ENCODE measurements at regions of chr10 and their contacts with region 1.

Region 1: DNA sequence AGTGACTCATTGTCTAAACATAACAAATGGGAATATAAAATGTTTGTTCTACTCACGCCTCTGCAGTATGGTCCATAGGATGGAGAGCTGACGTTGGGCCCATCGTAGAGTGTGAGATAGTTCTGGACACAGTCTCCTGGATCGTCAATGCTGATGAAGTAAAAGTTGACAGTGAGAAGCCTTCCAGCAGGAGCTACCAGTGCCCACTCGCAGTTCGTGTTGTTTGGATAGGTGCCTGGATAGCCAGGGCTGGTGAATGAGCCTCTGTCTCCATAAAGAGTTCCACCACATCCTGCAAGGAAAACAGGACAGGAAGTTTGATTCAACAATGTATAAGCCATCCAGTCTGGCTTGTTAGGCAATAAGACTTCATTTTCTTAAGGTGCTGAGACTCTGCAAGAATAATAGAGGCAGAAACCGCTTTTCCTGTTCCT is 79.6 kb downstream of the OR13A1 start:
- DNase-seq: no peak
- ATAC-seq: peak; percentile 18
- H3K4me3 ChIP-seq: no peak overlapping the region
- H3K27ac ChIP-seq: no peak overlapping the region
- H3K4me1 ChIP-seq: peaks cover 0 to 5% of the 10 kb centered on the region in 2 experiments; a peak in 2 of 4 replicates
- H3K27me3 ChIP-seq: no peaks in the 10 kb centered on the region
- CTCF ChIP-seq: no peak
- POLR2A ChIP-seq: no peak
- RAD21 ChIP-seq: no peak

Region 2: DNA sequence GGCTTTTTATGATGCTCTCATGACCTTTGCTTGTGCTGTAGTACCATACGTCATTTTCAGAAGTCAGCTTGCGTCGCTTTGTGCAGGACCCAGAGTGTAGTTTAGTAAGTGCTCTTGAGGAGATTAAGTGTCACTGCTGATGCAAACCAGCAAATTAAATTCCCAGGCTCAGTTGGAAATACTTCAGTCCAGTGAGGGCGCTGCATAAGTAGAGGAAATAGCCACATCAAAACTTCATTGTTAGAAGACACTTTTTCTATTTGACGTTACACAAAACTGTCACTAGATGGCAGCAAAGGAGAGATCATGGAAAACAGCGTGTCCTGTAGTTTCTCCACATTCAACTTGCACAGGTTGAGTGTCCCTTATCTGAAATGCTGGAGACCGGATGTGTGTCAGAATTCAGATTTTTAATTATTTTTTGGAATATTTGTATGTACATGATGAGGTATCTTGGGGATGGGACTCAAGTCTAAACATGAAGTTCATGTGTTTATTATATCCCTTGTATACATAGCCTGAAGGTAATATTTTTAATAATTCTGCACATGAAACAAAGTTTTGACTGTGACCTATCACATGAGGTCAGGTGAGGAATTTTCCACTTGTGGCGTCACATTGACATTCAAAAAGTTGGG is 227.2 kb before region 1 on chr10:
- CTCF ChIA-PET with region 1: interaction called, 4 read pairs
- POLR2A ChIA-PET with region 1: no interaction called
- RAD21 ChIA-PET with region 1: no interaction called
- intact Hi-C with region 1: loop called (anchors 10 kb)
- DNase-seq: peak; percentile 87
- ATAC-seq: peak; percentile 98
- H3K4me3 ChIP-seq: no peak overlapping the region
- H3K27ac ChIP-seq: no peak overlapping the region
- H3K4me1 ChIP-seq: peaks cover 0 to 5% of the 10 kb centered on the region in 2 experiments; a peak in 2 of 4 replicates
- H3K27me3 ChIP-seq: no peaks in the 10 kb centered on the region
- CTCF ChIP-seq: peak; percentile 63 to 97 (median 85)
- POLR2A ChIP-seq: no peak
- RAD21 ChIP-seq: peak; percentile 95

Region 3: DNA sequence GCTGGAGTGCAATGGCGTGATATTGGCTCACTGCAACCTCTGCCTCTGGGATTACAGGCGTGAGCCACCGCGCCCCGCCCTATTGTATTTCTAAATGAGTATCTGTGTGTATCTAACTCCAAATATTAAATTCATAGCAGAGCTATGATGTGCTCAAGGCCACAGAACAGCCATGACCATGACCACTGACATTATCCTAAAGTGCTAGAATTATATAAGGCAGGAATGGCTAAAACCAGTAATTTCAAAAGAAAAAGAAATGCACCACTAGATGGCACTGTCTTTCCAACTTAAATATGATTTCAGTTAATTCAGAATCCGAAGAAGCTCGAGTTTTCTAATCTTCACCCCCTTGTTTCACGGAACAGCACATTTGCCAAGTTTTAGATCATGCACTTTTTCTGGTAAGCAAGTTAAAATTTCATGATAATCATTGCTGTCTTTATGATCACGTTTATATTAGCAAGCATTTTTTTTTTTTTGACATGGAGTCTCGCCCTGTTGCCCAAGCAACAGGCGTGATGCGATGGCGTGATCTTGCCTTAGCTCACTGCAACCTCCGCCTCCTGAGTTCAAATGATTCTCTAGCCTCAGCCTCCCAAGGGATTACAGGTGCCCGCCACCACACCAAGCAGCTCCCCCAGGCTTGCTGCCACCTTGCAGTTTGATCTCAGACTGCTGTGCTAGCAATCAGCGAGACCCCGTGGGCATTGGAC is 14.3 kb after region 1 on chr10:
- CTCF ChIA-PET with region 1: interaction called, 22 read pairs
- POLR2A ChIA-PET with region 1: interaction called, 3 read pairs
- RAD21 ChIA-PET with region 1: interaction called, 3 to 6 read pairs
- intact Hi-C with region 1: loop called (anchors 2 kb)
- DNase-seq: peak; percentile 53
- ATAC-seq: peak; percentile 85
- H3K4me3 ChIP-seq: peak overlapping the region; percentile 40 to 46
- H3K27ac ChIP-seq: peak overlapping the region; percentile 9; the same call in 1 of the 2 replicates
- H3K4me1 ChIP-seq: peaks cover 0 to 10% of the 10 kb centered on the region in 2 experiments; a peak in 1 of 4 replicates
- H3K27me3 ChIP-seq: no peaks in the 10 kb centered on the region
- CTCF ChIP-seq: peak; percentile 33 to 70 (median 51); a peak in 4 of 6 replicates
- POLR2A ChIP-seq: no peak
- RAD21 ChIP-seq: peak; percentile 74

Region 4: GRCh38 chr10:45491091-45491490 is 255.3 kb after region 1 on chr10:
- CTCF ChIA-PET with region 1: no interaction called
- POLR2A ChIA-PET with region 1: no interaction called
- RAD21 ChIA-PET with region 1: no interaction called
- intact Hi-C with region 1: no loop called
- DNase-seq: no peak
- ATAC-seq: no peak
- H3K4me3 ChIP-seq: no peak overlapping the region
- H3K27ac ChIP-seq: no peak overlapping the region
- H3K4me1 ChIP-seq: no peaks in the 10 kb centered on the region
- H3K27me3 ChIP-seq: no peaks in the 10 kb centered on the region
- CTCF ChIP-seq: no peak
- POLR2A ChIP-seq: no peak
- RAD21 ChIP-seq: no peak

Region 5: GRCh38 chr10:45672181-45673073 is 436.6 kb after region 1 on chr10 and contains the start of gene ZFAND4:
- CTCF ChIA-PET with region 1: interaction called, 3 read pairs
- POLR2A ChIA-PET with region 1: no interaction called
- RAD21 ChIA-PET with region 1: no interaction called
- intact Hi-C with region 1: loop called (anchors 10 kb)
- DNase-seq: peak; percentile 91
- ATAC-seq: peak; percentile 97
- H3K4me3 ChIP-seq: peak within 1 kb of the TSS; percentile 87 to 94
- H3K27ac ChIP-seq: peak within 1 kb of the TSS; percentile 90
- H3K4me1 ChIP-seq: peaks cover 5 to 16% of the 10 kb centered on the region in 2 experiments; a peak in 3 of 4 replicates
- H3K27me3 ChIP-seq: no peaks in the 10 kb centered on the region
- CTCF ChIP-seq: peak in 2 of 3 experiments; percentile 33 to 41; a peak in 4 of 6 replicates
- POLR2A ChIP-seq: peak; percentile 62
- RAD21 ChIP-seq: peak; percentile 46
- total RNA-seq, gene ZFAND4: 15.5 TPM

Region 6: DNA sequence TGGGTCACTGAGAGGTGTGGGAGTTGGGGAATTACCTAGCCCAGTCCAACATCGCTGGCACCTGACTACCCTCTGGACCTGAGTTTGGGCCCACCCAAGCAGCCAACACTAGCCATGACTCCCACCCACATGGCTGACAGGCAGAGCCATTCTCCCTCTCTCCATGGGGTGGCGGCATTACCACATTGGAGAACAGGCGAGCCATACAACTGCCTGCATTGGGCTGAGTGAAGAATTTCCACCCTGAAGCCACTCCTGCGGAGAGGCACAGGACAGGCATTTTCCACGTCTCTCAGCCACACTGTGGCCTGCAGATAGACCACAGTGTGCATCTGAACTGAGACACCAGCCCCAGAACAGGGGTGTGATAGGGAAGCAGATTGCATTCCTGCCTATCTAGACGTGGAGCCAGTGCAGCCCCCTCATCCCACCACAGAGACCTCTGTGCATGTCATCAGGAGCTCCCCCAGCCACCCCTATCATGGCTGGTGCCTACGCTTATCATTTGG is 992.8 kb after region 1 on chr10:
- CTCF ChIA-PET with region 1: no interaction called
- POLR2A ChIA-PET with region 1: no interaction called
- RAD21 ChIA-PET with region 1: no interaction called
- intact Hi-C with region 1: loop called (anchors 10 kb)
- DNase-seq: peak; percentile 44
- ATAC-seq: peak; percentile 95
- H3K4me3 ChIP-seq: no peak overlapping the region
- H3K27ac ChIP-seq: no peak overlapping the region
- H3K4me1 ChIP-seq: peaks cover 3 to 11% of the 10 kb centered on the region in 2 experiments; a peak in 2 of 4 replicates
- H3K27me3 ChIP-seq: no peaks in the 10 kb centered on the region
- CTCF ChIP-seq: peak; percentile 88 to 93 (median 89)
- POLR2A ChIP-seq: no peak
- RAD21 ChIP-seq: peak; percentile 96